Breast epithelium (tissue), 4 donors: ENCODE measurements at regions of chr11 and their contacts with region 1.

Region 1: GRCh38 chr11:46845740-46846509 is at the start of gene CKAP5:
- DNase-seq: peak; percentile 84 to 86
- H3K4me3 ChIP-seq: peak within 1 kb of the TSS; percentile 81 to 94 (median 85)
- H3K27ac ChIP-seq: peak within 1 kb of the TSS; percentile 75 to 77
- H3K4me1 ChIP-seq: no peaks in the 10 kb centered on the region
- H3K27me3 ChIP-seq: no peaks in the 10 kb centered on the region
- CTCF ChIP-seq: no peak
- POLR2A ChIP-seq: peak; percentile 52
- total RNA-seq, gene CKAP5: 32.1 to 45.2 (median 41.4) TPM

Region 2: DNA sequence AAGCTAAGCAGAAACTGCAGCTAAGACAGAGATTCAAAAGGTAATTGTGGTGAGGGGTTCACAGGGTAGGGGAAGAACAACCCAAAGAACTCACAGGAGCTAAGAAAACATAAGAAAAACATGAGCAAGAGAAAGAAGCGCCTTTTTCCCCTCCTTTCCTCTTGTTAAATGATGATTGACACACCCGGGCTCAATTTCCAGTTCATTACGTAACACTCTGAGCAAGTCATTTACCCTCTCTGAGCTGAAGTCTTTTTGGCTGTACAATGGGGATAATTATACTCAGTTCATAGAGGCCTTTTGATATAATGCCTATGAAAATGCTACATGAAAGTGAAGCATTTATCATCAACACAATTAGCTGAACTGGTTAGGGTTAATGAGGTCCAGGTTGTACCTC is 55.2 kb after region 1 on chr11:
- intact Hi-C with region 1: loop called (anchors 2 kb)
- DNase-seq: no peak
- H3K4me3 ChIP-seq: no peak overlapping the region
- H3K27ac ChIP-seq: no peak overlapping the region
- H3K4me1 ChIP-seq: no peaks in the 10 kb centered on the region
- H3K27me3 ChIP-seq: no peaks in the 10 kb centered on the region
- CTCF ChIP-seq: no peak
- POLR2A ChIP-seq: no peak